B cell (primary cell): ENCODE measurements at regions of chr6 and their contacts with region 1.

Region 1: DNA sequence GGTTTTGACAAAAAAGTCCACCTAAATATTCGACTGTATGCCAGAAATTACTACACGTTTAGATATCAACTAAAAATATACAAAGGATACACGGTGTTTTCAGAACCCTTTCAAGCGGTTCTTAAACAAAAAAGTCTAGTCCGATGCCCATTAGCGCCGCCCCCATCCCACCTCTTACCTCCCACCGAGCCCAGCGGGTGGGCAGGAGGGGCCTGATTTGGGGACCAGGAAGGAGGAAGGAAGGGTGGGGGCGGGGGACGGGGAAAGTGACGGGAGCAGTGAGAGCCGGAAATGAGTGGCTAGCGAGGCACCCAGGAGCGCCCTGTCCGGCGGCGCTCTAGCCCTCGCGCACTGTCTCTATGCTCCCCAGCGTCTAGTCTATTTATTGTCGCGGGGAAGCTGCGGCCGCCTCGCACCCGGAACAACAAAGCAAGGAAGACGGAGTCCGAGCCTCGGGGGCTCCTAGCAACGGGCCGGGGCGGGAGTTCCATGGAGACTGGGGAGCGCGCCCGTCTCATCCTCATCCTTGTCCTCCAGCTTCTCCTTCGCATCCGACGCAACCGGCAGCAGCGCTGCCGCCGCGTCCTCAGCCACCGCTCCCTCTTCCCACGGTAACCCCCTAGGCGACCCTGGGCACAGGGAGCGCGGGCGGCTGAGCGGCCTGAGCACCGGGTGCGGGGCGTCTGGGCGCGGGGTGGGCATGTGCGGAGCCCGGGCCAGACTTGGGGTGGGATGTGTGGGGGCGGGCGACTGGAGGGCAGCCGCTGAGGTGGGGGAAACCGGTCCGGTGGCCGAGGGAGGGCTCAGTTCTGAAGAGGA is at the start of gene TBPL1:
- DNase-seq: peak; percentile 97
- ATAC-seq: peak; percentile 78
- H3K4me3 ChIP-seq: peak within 1 kb of the TSS; percentile 78 to 98 (median 94)
- H3K4me3 Mint-ChIP-seq: peak within 1 kb of the TSS; percentile 98
- H3K27ac ChIP-seq: peak within 1 kb of the TSS; percentile 83 to 89
- H3K27ac Mint-ChIP-seq: peak within 1 kb of the TSS; percentile 97
- H3K4me1 ChIP-seq: peaks cover 20 to 27% of the 10 kb centered on the region in 2 donors
- H3K4me1 Mint-ChIP-seq: peaks cover 48% of the 10 kb centered on the region
- H3K27me3 ChIP-seq: no peaks in the 10 kb centered on the region
- H3K27me3 Mint-ChIP-seq: no peaks in the 10 kb centered on the region
- CTCF ChIP-seq: no peak
- total RNA-seq, gene TBPL1: 26.9 and 29.6 TPM in 2 replicates

Region 2: GRCh38 chr6:133854364-133855275 is 98.4 kb before region 1 on chr6:
- CTCF ChIA-PET with region 1: no interaction called
- POLR2A ChIA-PET with region 1: no interaction called
- intact Hi-C with region 1: no loop called
- DNase-seq: peak; percentile 12
- ATAC-seq: no peak
- H3K4me3 ChIP-seq: no peak overlapping the region
- H3K4me3 Mint-ChIP-seq: no peak overlapping the region
- H3K27ac ChIP-seq: no peak overlapping the region
- H3K27ac Mint-ChIP-seq: no peak overlapping the region
- H3K4me1 ChIP-seq: peaks cover 0 to 4% of the 10 kb centered on the region in 2 donors
- H3K4me1 Mint-ChIP-seq: peaks cover 6% of the 10 kb centered on the region
- H3K27me3 ChIP-seq: peaks cover 0 to 26% (median 9%) of the 10 kb centered on the region in 4 experiments
- H3K27me3 Mint-ChIP-seq: peaks cover 60% of the 10 kb centered on the region
- CTCF ChIP-seq: no peak

Region 3: DNA sequence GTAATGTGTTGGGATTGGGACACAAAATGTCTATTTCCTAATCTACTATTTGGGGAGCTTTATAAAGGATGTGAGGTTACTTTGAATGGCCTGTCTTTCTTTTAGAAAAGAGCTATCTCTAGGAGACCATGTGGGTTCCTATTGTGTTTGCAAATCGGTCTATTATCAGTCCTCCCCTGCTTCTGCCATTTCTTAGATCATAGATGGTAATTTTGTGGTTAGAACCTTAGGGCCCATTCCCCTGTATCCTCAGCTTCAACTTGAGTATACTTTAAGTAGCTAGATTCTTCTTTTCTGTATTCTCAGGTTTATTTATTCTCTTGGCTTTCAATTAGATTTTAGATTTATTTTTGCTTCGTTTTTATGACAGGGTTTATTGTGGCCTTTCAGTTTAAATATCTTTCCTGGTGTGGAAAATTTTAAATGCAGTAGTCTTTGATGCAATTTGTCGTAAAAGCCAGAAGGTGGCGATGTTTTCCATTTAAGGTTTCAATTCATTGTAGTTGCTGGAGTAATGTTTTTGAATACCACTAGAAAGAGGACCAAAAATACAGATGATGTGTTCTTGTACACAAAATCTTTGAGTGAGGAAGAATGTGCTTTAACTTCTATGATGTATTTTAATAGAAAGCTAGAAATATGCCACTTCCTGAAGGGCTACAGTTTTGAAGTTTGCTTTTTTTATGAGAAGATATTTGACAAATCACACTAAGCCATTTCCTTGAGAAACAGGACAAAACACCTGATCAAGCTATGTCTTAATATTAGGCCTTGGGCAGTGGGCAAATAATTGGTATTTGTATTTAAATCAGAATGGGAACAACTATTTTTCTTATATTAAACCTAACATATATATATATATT is 20.3 kb after region 1 on chr6:
- CTCF ChIA-PET with region 1: interaction called, 22 read pairs
- POLR2A ChIA-PET with region 1: no interaction called
- intact Hi-C with region 1: loop called (anchors 1 kb)
- DNase-seq: peak; percentile 63
- ATAC-seq: peak; percentile 43
- H3K4me3 ChIP-seq: no peak overlapping the region
- H3K4me3 Mint-ChIP-seq: no peak overlapping the region
- H3K27ac ChIP-seq: no peak overlapping the region
- H3K27ac Mint-ChIP-seq: no peak overlapping the region
- H3K4me1 ChIP-seq: no peaks in the 10 kb centered on the region
- H3K4me1 Mint-ChIP-seq: peaks cover 27% of the 10 kb centered on the region
- H3K27me3 ChIP-seq: no peaks in the 10 kb centered on the region
- H3K27me3 Mint-ChIP-seq: no peaks in the 10 kb centered on the region
- CTCF ChIP-seq: peak; percentile 86

Region 4: GRCh38 chr6:135054569-135055498 is 1101.8 kb after region 1 on chr6 and contains the start of gene HBS1L:
- CTCF ChIA-PET with region 1: no interaction called
- POLR2A ChIA-PET with region 1: no interaction called
- intact Hi-C with region 1: loop called (anchors 2 kb)
- DNase-seq: peak; percentile 99
- ATAC-seq: peak; percentile 98
- H3K4me3 ChIP-seq: peak within 1 kb of the TSS; percentile 68 to 98 (median 91)
- H3K4me3 Mint-ChIP-seq: peak within 1 kb of the TSS; percentile 95
- H3K27ac ChIP-seq: peak within 1 kb of the TSS; percentile 80 to 95
- H3K27ac Mint-ChIP-seq: peak within 1 kb of the TSS; percentile 95
- H3K4me1 ChIP-seq: peaks cover 16 to 19% of the 10 kb centered on the region in 2 donors
- H3K4me1 Mint-ChIP-seq: peaks cover 34% of the 10 kb centered on the region
- H3K27me3 ChIP-seq: no peaks in the 10 kb centered on the region
- H3K27me3 Mint-ChIP-seq: no peaks in the 10 kb centered on the region
- CTCF ChIP-seq: no peak
- total RNA-seq, gene HBS1L: 58.2 and 58.9 TPM in 2 replicates

Region 5: GRCh38 chr6:135323202-135323668 is 1370.2 kb after region 1 on chr6:
- CTCF ChIA-PET with region 1: no interaction called
- POLR2A ChIA-PET with region 1: no interaction called
- intact Hi-C with region 1: no loop called
- DNase-seq: peak; percentile 52
- ATAC-seq: peak; percentile 69
- H3K4me3 ChIP-seq: peak overlapping the region in 2 of 5 experiments; percentile 5 to 11
- H3K4me3 Mint-ChIP-seq: peak overlapping the region; percentile 30
- H3K27ac ChIP-seq: peak overlapping the region in 1 of 2 donors; percentile 10
- H3K27ac Mint-ChIP-seq: no peak overlapping the region
- H3K4me1 ChIP-seq: peaks cover 11 to 12% of the 10 kb centered on the region in 2 donors
- H3K4me1 Mint-ChIP-seq: peaks cover 11% of the 10 kb centered on the region
- H3K27me3 ChIP-seq: no peaks in the 10 kb centered on the region
- H3K27me3 Mint-ChIP-seq: no peaks in the 10 kb centered on the region
- CTCF ChIP-seq: no peak